GM10248 (cell line): ENCODE measurements at regions of chr20 and their contacts with region 1.

Region 1: DNA sequence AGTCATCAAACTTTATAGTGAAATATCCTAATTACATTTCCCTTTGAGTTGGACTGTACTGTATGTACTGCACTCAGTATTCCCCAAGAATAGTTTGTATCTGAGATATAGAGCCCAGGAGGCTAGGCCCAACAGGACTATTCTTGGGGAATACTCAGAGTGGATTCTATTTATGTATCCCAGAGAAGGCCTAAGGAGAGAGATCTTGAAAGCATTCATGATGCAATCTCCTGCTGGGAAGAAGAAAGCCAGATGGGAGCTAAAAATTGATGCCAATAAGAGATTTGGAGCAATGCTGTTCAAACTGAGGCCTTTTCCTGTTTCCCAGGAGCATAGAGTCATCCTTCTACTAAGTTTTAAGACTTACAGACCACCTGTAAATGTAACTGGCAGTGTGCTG is 452.1 kb upstream of the PLCB4 start:
- DNase-seq: no peak
- CTCF ChIP-seq: no peak

Region 2: GRCh38 chr20:8545212-8545611 is 71.6 kb before region 1 on chr20:
- CTCF ChIA-PET with region 1: no interaction called
- POLR2A ChIA-PET with region 1: no interaction called
- DNase-seq: no peak
- CTCF ChIP-seq: no peak

Region 3: DNA sequence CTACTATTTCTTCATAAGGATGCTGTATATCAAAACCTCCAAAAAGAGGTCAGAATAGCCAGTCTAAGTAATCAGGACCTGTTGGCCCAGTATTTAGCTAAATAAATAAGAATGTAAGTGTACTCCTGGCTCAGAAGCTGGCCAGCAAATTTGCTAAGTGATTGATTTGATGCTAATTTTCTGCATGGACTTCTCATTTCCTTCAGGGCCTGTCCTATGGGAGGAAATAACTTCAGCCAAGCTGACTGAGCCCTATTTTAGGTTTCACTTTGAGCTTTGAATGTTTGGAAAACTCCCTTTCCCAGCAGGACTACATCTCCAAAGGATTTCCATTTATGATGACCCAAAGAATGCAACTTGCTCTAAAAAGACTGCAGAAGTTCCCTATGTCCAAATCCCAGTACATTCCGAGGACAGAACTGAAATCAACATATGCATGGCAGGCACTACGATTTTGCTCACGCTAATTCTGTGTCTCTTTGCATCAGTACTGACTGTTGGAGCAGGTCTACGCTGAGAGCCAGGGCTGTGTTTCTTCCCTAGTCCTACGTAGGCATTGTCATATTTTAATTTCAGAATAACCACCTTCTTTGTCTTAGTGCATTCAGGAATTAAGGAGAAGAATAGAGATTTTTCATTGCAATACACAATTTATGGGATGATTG is 10.7 kb after region 1 on chr20:
- CTCF ChIA-PET with region 1: interaction called, 11 read pairs
- POLR2A ChIA-PET with region 1: no interaction called
- DNase-seq: no peak
- CTCF ChIP-seq: no peak